ENCODE measurements at regions of chr2 and their contacts with region 1.

Region 1: DNA sequence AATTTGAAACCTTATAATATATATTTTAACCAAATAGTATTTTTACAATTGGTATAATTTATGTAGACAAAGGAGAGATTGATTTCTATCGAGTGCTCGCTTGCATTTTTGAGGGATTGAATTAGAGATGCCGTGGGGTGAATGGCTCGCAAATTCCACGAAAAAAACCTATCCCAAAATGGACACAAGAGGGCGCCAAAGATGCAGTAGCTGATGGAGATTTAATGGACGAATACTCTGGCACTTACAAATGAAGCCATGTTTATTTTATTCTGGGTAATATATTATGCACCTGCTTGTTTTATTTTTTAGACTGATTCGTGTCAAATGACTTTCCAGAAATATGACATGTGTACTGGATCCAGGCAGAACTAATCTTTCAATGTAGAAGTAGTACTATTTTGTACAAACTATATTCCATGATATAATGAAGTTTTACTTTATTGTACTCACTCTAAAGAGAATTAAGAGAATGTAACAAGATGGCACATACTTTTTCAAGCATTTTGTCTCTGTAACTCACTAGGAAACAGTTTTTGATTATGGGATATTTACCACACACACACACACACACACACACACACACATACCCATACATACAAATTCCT is 505.4 kb downstream of the PLCL1 start:
- DNase-seq: peak; percentile 48
- H3K4me3 ChIP-seq: no peak overlapping the region
- H3K27ac ChIP-seq: no peak overlapping the region
- H3K4me1 ChIP-seq: no peaks in the 10 kb centered on the region
- H3K27me3 ChIP-seq: peaks cover 22% of the 10 kb centered on the region
- CTCF ChIP-seq: peak; percentile 92
- EP300 ChIP-seq: no peak
- RAD21 ChIP-seq: peak; percentile 67

Region 2: GRCh38 chr2:198073253-198073652 is 236.5 kb before region 1 on chr2:
- CTCF ChIA-PET with region 1: no interaction called
- POLR2A ChIA-PET with region 1: no interaction called
- DNase-seq: no peak
- H3K4me3 ChIP-seq: no peak overlapping the region
- H3K27ac ChIP-seq: peak overlapping the region; percentile 43 to 76; a peak in 3 of 4 replicates
- H3K4me1 ChIP-seq: no peaks in the 10 kb centered on the region; a peak in 1 of 4 replicates
- H3K27me3 ChIP-seq: no peaks in the 10 kb centered on the region
- CTCF ChIP-seq: no peak
- EP300 ChIP-seq: no peak
- RAD21 ChIP-seq: no peak

Region 3: DNA sequence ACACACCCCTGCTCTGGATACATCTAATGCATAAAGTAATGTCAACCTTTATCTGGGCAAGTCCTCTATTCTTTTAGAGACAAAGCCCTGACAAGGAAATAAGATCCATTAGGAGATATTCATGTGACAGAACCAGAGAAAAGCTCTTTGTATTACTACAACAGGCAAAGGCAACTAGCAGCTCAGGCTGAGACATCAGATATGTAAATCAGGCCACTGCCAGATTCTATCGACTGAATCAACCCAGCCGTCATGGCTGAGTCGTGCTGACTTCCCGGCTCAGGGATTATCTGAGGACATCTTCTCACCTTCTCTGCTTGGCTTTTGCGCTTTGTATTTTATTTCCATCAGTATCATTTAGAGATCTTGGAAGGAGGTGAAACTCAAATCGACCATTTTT is 210.9 kb before region 1 on chr2:
- CTCF ChIA-PET with region 1: no interaction called
- POLR2A ChIA-PET with region 1: no interaction called
- DNase-seq: peak; percentile 15
- H3K4me3 ChIP-seq: no peak overlapping the region
- H3K27ac ChIP-seq: peak overlapping the region; percentile 54 to 79; a peak in 3 of 4 replicates
- H3K4me1 ChIP-seq: peaks cover 3 to 5% of the 10 kb centered on the region in 2 experiments; a peak in 3 of 4 replicates
- H3K27me3 ChIP-seq: no peaks in the 10 kb centered on the region
- CTCF ChIP-seq: no peak
- EP300 ChIP-seq: no peak; a peak in 1 of 4 replicates
- RAD21 ChIP-seq: no peak

Region 4: DNA sequence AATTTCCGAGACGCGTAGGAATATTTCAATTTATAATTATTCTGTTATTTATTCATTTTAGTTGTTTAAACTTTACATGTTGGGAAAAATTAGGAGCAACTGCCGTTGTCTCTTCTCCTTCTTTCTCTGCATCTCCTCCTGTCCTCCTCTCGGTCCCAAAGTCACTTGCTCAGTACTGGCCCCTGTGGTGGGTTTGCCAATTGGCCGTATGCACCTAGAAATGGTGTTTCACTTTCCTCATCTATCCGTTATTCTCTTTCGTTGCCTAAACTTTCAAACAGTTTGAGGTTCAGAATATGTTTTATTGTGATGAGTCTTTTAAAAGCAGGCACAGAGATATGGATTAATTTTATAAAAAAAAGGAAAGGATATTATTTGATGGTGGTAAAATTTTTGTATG is 12.5 kb after region 1 on chr2:
- CTCF ChIA-PET with region 1: interaction called, 19 read pairs
- POLR2A ChIA-PET with region 1: no interaction called
- DNase-seq: peak; percentile 4
- H3K4me3 ChIP-seq: no peak overlapping the region
- H3K27ac ChIP-seq: no peak overlapping the region
- H3K4me1 ChIP-seq: no peaks in the 10 kb centered on the region
- H3K27me3 ChIP-seq: peaks cover 9% of the 10 kb centered on the region; the same call in 1 of the 2 replicates
- CTCF ChIP-seq: peak; percentile 46
- EP300 ChIP-seq: no peak
- RAD21 ChIP-seq: no peak

Region 5: GRCh38 chr2:198337368-198337767 is 27.6 kb after region 1 on chr2:
- CTCF ChIA-PET with region 1: interaction called, 17 read pairs
- POLR2A ChIA-PET with region 1: no interaction called
- DNase-seq: no peak
- H3K4me3 ChIP-seq: no peak overlapping the region
- H3K27ac ChIP-seq: no peak overlapping the region
- H3K4me1 ChIP-seq: no peaks in the 10 kb centered on the region
- H3K27me3 ChIP-seq: peaks cover 21% of the 10 kb centered on the region; the same call in 1 of the 2 replicates
- CTCF ChIP-seq: no peak
- EP300 ChIP-seq: no peak
- RAD21 ChIP-seq: no peak

Region 6: DNA sequence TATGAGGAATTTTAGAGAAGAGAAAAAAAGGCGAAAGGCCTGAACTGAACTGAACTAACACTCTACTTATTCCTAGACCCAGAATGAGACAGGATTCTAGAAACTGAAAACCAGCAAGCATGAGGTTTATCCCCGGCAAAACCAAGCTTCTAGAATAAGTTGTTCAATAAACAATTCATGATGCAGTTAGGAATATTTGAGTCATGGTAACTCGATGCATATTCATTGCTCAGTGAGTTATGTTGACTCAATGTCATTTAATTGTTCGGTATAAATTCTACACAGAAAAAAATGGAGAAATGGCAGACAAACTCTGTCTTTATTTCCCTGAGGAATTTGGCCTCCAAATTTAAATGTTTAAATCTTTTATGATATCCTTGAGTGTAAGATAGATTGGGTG is 826.5 kb after region 1 on chr2:
- CTCF ChIA-PET with region 1: no interaction called
- POLR2A ChIA-PET with region 1: no interaction called
- DNase-seq: no peak
- H3K4me3 ChIP-seq: no peak overlapping the region
- H3K27ac ChIP-seq: no peak overlapping the region
- H3K4me1 ChIP-seq: no peaks in the 10 kb centered on the region
- H3K27me3 ChIP-seq: no peaks in the 10 kb centered on the region; the same call in 1 of the 2 replicates
- CTCF ChIP-seq: no peak
- EP300 ChIP-seq: no peak
- RAD21 ChIP-seq: no peak

Region 7: DNA sequence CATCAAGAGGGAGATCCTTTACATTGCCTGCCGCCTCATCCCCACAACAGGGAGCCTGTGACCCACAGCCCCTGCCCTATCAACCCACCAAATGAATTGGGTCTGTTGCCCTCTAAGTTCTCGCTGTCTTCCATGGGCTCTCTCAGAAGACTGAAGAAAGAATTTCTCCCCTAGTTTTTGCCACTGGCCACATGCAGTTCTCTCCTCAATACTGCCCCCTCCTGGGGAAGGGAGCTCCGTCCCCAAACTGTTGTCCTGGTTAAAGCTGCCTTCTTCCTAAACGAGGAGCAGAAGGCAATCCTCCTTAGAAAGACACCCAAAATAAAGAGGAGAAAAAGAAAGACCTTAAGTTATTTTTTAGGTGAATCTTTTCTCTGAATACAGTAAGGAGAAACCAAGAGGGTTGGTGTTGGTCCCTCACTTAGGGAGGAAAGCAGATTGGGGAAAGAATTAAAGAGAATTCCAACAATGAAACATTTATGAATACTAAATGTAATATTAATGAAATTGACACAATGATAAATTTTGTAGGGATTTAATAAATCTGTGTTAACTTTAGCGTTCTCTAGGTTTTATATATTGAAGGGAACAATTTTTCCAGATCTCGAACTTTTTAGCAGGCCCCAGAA is 1179.1 kb after region 1 on chr2:
- CTCF ChIA-PET with region 1: interaction called, 82 read pairs
- POLR2A ChIA-PET with region 1: no interaction called
- DNase-seq: peak; percentile 59
- H3K4me3 ChIP-seq: no peak overlapping the region
- H3K27ac ChIP-seq: no peak overlapping the region
- H3K4me1 ChIP-seq: no peaks in the 10 kb centered on the region
- H3K27me3 ChIP-seq: peaks cover 5% of the 10 kb centered on the region; the same call in 1 of the 2 replicates
- CTCF ChIP-seq: peak; percentile 76
- EP300 ChIP-seq: no peak
- RAD21 ChIP-seq: peak; percentile 52

Region 8: GRCh38 chr2:199495149-199495548 is 1185.4 kb after region 1 on chr2:
- CTCF ChIA-PET with region 1: interaction called, 82 read pairs
- POLR2A ChIA-PET with region 1: no interaction called
- DNase-seq: no peak
- H3K4me3 ChIP-seq: no peak overlapping the region
- H3K27ac ChIP-seq: no peak overlapping the region
- H3K4me1 ChIP-seq: no peaks in the 10 kb centered on the region
- H3K27me3 ChIP-seq: peaks cover 21% of the 10 kb centered on the region; the same call in 1 of the 2 replicates
- CTCF ChIP-seq: no peak
- EP300 ChIP-seq: no peak
- RAD21 ChIP-seq: no peak

Region 9: DNA sequence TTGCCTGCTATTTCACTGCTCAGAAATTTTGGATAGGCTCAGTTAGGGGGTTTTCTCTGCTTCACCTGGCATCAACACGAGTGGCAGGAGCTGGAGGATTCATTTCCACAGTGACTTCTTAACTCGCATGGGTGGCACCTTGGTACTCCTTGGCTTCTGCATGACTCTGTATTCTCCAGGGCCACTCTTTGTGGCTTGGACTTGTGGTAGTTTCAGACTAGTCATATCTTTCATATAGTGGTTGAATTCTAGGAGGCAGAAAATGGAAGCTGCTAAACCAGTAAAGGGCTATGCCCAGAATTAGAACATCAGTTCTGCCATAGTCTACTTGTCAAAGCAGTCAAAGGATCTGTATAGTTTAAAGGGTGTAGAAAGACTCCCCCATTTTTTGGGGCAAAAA is 1652.4 kb after region 1 on chr2:
- CTCF ChIA-PET with region 1: no interaction called
- POLR2A ChIA-PET with region 1: no interaction called
- DNase-seq: no peak
- H3K4me3 ChIP-seq: no peak overlapping the region
- H3K27ac ChIP-seq: no peak overlapping the region
- H3K4me1 ChIP-seq: no peaks in the 10 kb centered on the region; a peak in 1 of 4 replicates
- H3K27me3 ChIP-seq: no peaks in the 10 kb centered on the region
- CTCF ChIP-seq: no peak
- EP300 ChIP-seq: no peak
- RAD21 ChIP-seq: no peak

Measured in SK-N-SH (cell line).